GM12878 (cell line): ENCODE measurements at regions of chr11 and their contacts with region 1.

Region 1: GRCh38 chr11:118145285-118146227 is 7.1 kb downstream of the SCN4B start:
- DNase-seq: peak; percentile 35
- ATAC-seq: peak; percentile 96
- H3K4me3 ChIP-seq: peak overlapping the region; percentile 73
- H3K27ac ChIP-seq: no peak overlapping the region
- H3K4me1 ChIP-seq: no peaks in the 10 kb centered on the region
- H3K27me3 ChIP-seq: peaks cover 5 to 10% of the 10 kb centered on the region in 2 experiments
- CTCF ChIP-seq: peak; percentile 82 to 90 (median 86)
- EP300 ChIP-seq: no peak
- POLR2A ChIP-seq: no peak
- RAD21 ChIP-seq: peak; percentile 83

Region 2: DNA sequence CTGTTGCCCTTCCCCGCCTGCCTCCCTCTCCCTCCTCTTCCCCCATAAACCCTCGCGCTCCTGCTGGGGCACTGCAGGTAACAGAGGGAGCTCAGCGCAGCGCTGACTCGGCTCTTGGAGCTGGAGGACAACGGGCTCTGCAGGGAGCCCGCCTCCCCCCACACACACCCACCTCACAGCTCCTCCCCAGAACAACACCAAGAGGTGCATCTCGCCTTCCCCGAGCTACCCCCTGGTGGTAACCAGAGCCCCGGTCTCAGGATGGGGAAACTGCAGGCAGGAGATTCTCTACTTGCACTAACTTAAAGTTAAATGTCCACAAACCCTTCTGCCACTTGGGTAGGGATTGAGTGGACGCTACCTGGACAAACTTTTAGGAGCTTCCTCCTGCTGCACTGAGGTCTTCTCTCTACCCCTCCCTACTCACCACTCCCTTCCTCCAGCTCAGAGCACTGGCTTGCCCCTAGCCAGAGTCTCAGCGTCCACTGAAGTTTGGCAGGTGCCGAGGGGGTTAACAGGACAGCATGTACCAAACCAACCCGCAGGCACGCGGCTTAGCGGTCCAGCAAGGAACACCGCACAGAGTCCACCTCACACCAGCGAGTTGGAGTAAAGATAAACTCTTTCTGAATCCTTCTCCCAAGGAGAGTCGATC is 11.1 kb after region 1 on chr11:
- CTCF ChIA-PET with region 1: interaction called, 20 read pairs
- POLR2A ChIA-PET with region 1: no interaction called
- RAD21 ChIA-PET with region 1: no interaction called
- SMC1A ChIA-PET with region 1: interaction called, 3 read pairs
- in situ Hi-C with region 1: no loop called
- intact Hi-C with region 1: no loop called
- DNase-seq: no peak
- ATAC-seq: peak; percentile 44; the same call in 2 of the 3 replicates
- H3K4me3 ChIP-seq: no peak overlapping the region
- H3K27ac ChIP-seq: no peak overlapping the region
- H3K4me1 ChIP-seq: no peaks in the 10 kb centered on the region
- H3K27me3 ChIP-seq: peaks cover 26 to 29% of the 10 kb centered on the region in 2 experiments
- CTCF ChIP-seq: no peak
- EP300 ChIP-seq: no peak
- POLR2A ChIP-seq: no peak
- RAD21 ChIP-seq: no peak

Region 3: GRCh38 chr11:118180300-118180703 is 34.7 kb after region 1 on chr11:
- CTCF ChIA-PET with region 1: interaction called, 10 read pairs
- POLR2A ChIA-PET with region 1: no interaction called
- RAD21 ChIA-PET with region 1: no interaction called
- SMC1A ChIA-PET with region 1: interaction called, 3 read pairs
- in situ Hi-C with region 1: no loop called
- intact Hi-C with region 1: no loop called
- DNase-seq: no peak
- ATAC-seq: peak; percentile 88
- H3K4me3 ChIP-seq: no peak overlapping the region
- H3K27ac ChIP-seq: no peak overlapping the region
- H3K4me1 ChIP-seq: no peaks in the 10 kb centered on the region
- H3K27me3 ChIP-seq: peaks cover 0 to 7% of the 10 kb centered on the region in 2 experiments; a peak in 1 of 4 replicates
- CTCF ChIP-seq: 0 out of 6 replicates have a peak, but pooled peaks of 1 of the 3 experiments have one; percentile 2
- EP300 ChIP-seq: no peak
- POLR2A ChIP-seq: no peak
- RAD21 ChIP-seq: no peak

Region 4: DNA sequence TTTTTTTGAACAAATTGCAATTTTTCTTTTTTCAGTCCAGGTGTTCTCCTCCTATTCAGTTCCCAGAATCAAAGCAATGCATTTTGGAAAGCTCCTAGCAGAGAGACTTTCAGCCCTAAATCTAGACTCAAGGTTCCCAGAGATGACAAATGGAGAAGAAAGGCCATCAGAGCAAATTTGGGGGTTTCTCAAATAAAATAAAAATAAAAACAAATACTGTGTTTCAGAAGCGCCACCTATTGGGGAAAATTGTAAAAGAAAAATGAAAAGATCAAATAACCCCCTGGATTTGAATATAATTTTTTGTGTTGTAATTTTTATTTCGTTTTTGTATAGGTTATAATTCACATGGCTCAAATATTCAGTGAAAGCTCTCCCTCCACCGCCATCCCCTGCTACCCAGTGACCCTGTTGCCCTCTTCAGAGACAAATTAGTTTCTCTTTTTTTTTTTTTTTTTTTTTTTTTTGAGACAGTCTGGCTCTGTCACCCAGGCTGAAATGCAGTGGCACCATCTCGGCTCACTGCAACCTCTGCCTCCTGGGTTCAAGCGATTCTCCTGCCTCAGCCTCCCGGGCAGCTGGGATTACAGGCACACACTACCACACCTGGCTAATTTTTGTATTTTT is 207.6 kb after region 1 on chr11:
- CTCF ChIA-PET with region 1: interaction called, 3 read pairs
- POLR2A ChIA-PET with region 1: no interaction called
- RAD21 ChIA-PET with region 1: interaction called, 3 read pairs
- SMC1A ChIA-PET with region 1: no interaction called
- in situ Hi-C with region 1: no loop called
- intact Hi-C with region 1: loop called (anchors 5 kb)
- DNase-seq: no peak
- ATAC-seq: no peak
- H3K4me3 ChIP-seq: no peak overlapping the region
- H3K27ac ChIP-seq: no peak overlapping the region
- H3K4me1 ChIP-seq: no peaks in the 10 kb centered on the region
- H3K27me3 ChIP-seq: peaks cover 0 to 4% of the 10 kb centered on the region in 2 experiments; a peak in 1 of 4 replicates
- CTCF ChIP-seq: peak; percentile 34 to 49 (median 47); a peak in 5 of 6 replicates
- EP300 ChIP-seq: no peak
- POLR2A ChIP-seq: no peak
- RAD21 ChIP-seq: peak; percentile 55

Region 5: GRCh38 chr11:118565051-118565450 is 419.5 kb after region 1 on chr11:
- CTCF ChIA-PET with region 1: no interaction called
- POLR2A ChIA-PET with region 1: no interaction called
- RAD21 ChIA-PET with region 1: no interaction called
- SMC1A ChIA-PET with region 1: no interaction called
- in situ Hi-C with region 1: no loop called
- intact Hi-C with region 1: loop called (anchors 5 kb)
- DNase-seq: no peak
- ATAC-seq: no peak
- H3K4me3 ChIP-seq: peak overlapping the region; percentile 26; the same call in 1 of the 2 replicates
- H3K27ac ChIP-seq: no peak overlapping the region
- H3K4me1 ChIP-seq: 0 out of 2 replicates have a peak, but pooled peaks cover 4% of the 10 kb centered on the region
- H3K27me3 ChIP-seq: no peaks in the 10 kb centered on the region
- CTCF ChIP-seq: no peak
- EP300 ChIP-seq: no peak
- POLR2A ChIP-seq: no peak
- RAD21 ChIP-seq: no peak